ENCODE measurements at regions of chr9 and their contacts with region 1.

Region 1: DNA sequence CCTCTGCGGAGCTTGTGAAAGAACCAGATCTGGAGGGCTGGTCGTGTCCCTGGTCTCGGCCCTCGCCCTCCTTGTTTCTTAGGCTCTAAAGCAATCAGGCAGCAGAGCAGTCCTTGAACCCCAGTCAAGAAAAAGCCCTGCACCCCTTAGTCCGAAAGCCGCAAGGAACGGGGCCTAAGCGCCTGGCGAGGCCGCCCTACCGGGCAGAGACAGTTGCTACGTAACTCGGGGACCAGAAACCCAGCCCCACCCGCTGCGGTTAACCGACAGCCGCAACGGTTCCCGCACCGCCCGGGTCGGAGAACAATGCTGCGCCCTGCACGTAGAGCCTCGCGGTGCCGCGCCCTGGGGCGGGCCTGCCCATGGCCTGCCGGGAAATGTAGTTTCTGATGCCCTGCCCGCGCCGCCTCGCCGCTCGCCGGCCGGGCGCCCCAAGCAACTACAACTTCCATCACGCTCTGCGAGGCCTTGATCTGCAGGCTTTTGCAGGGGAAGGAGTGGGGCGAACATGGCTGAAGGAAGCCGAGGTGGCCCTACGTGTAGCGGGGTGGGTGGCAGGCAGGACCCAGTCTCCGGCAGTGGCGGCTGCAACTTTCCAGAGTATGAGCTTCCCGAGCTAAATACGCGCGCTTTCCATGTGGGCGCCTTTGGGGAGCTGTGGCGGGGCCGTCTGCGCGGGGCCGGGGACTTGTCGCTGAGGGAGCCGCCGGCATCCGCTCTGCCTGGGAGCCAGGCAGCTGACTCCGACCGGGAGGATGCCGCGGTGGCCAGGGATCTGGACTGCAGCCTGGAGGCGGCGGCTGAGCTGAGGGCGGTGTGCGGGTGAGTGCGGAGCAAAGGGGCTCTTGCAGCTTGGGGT is at the start of gene SNAPC3:
- DNase-seq: peak; percentile 90
- ATAC-seq: peak; percentile 95
- H3K4me3 Mint-ChIP-seq: peak within 1 kb of the TSS; percentile 91
- H3K27ac Mint-ChIP-seq: peak within 1 kb of the TSS; percentile 87
- H3K4me1 Mint-ChIP-seq: peaks cover 39% of the 10 kb centered on the region
- H3K27me3 Mint-ChIP-seq: no peaks in the 10 kb centered on the region
- CTCF ChIP-seq: no peak
- total RNA-seq, gene SNAPC3: 36.4 and 37.6 TPM in 2 replicates

Region 2: GRCh38 chr9:15104826-15105420 is 317.7 kb before region 1 on chr9:
- CTCF ChIA-PET with region 1: no interaction called
- POLR2A ChIA-PET with region 1: no interaction called
- intact Hi-C with region 1: loop called (anchors 10 kb)
- DNase-seq: no peak
- ATAC-seq: no peak
- H3K4me3 Mint-ChIP-seq: no peak overlapping the region
- H3K27ac Mint-ChIP-seq: no peak overlapping the region
- H3K4me1 Mint-ChIP-seq: no peaks in the 10 kb centered on the region
- H3K27me3 Mint-ChIP-seq: peaks cover 9% of the 10 kb centered on the region
- CTCF ChIP-seq: no peak

Region 3: GRCh38 chr9:15277400-15278090 is 145.1 kb before region 1 on chr9:
- CTCF ChIA-PET with region 1: interaction called, 4 read pairs
- POLR2A ChIA-PET with region 1: no interaction called
- intact Hi-C with region 1: loop called (anchors 1 kb)
- DNase-seq: no peak
- ATAC-seq: peak; percentile 60
- H3K4me3 Mint-ChIP-seq: no peak overlapping the region
- H3K27ac Mint-ChIP-seq: no peak overlapping the region
- H3K4me1 Mint-ChIP-seq: peaks cover 4% of the 10 kb centered on the region
- H3K27me3 Mint-ChIP-seq: no peaks in the 10 kb centered on the region
- CTCF ChIP-seq: no peak

Region 4: DNA sequence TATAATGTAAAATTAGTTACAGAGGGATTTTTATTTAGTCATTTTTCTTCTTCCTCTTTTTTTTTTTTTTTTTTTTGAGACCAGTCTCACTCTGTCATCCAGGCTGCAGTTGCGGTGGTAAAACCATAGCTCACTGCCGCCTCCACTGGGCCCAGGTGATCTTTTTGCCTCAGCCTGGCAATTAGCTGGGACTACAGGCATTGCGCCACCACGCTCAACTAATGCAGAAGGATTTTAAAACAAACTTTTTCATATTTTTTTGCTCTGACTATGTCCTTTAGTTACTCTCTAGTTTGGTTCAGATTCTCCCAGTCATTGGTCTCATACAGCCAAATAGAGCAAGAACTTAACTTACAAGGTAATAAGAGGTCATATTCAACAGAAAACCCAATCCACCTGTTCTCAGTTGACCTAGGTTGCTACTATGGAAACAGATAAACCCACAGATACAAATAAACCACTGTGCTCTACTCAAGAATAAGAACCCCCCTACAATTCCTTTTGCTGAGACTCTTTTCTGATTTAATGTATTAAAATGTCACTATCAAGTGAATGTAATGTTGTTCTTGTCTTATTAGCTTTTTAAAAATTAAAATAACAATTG is 65.4 kb before region 1 on chr9:
- CTCF ChIA-PET with region 1: no interaction called
- POLR2A ChIA-PET with region 1: no interaction called
- intact Hi-C with region 1: loop called (anchors 2 kb)
- DNase-seq: no peak
- ATAC-seq: peak; percentile 87
- H3K4me3 Mint-ChIP-seq: no peak overlapping the region
- H3K27ac Mint-ChIP-seq: no peak overlapping the region
- H3K4me1 Mint-ChIP-seq: peaks cover 6% of the 10 kb centered on the region
- H3K27me3 Mint-ChIP-seq: no peaks in the 10 kb centered on the region
- CTCF ChIP-seq: no peak

Region 5: GRCh38 chr9:15374336-15374735 is 48.3 kb before region 1 on chr9:
- CTCF ChIA-PET with region 1: no interaction called
- POLR2A ChIA-PET with region 1: no interaction called
- intact Hi-C with region 1: no loop called
- DNase-seq: no peak
- ATAC-seq: peak; percentile 40
- H3K4me3 Mint-ChIP-seq: no peak overlapping the region
- H3K27ac Mint-ChIP-seq: no peak overlapping the region
- H3K4me1 Mint-ChIP-seq: peaks cover 7% of the 10 kb centered on the region
- H3K27me3 Mint-ChIP-seq: peaks cover 10% of the 10 kb centered on the region
- CTCF ChIP-seq: no peak

Region 6: GRCh38 chr9:15469406-15469805 is 46.8 kb after region 1 on chr9:
- CTCF ChIA-PET with region 1: no interaction called
- POLR2A ChIA-PET with region 1: no interaction called
- intact Hi-C with region 1: loop called (anchors 5 kb)
- DNase-seq: no peak
- ATAC-seq: no peak
- H3K4me3 Mint-ChIP-seq: no peak overlapping the region
- H3K27ac Mint-ChIP-seq: no peak overlapping the region
- H3K4me1 Mint-ChIP-seq: peaks cover 2% of the 10 kb centered on the region
- H3K27me3 Mint-ChIP-seq: no peaks in the 10 kb centered on the region
- CTCF ChIP-seq: no peak

Region 7: GRCh38 chr9:15552636-15553527 is 130.3 kb after region 1 on chr9 and contains the start of gene CCDC171:
- CTCF ChIA-PET with region 1: no interaction called
- POLR2A ChIA-PET with region 1: interaction called, 4 read pairs
- intact Hi-C with region 1: loop called (anchors 1 kb)
- DNase-seq: peak; percentile 76
- ATAC-seq: peak; percentile 85
- H3K4me3 Mint-ChIP-seq: peak within 1 kb of the TSS; percentile 96
- H3K27ac Mint-ChIP-seq: peak within 1 kb of the TSS; percentile 82
- H3K4me1 Mint-ChIP-seq: peaks cover 19% of the 10 kb centered on the region
- H3K27me3 Mint-ChIP-seq: no peaks in the 10 kb centered on the region
- CTCF ChIP-seq: no peak
- total RNA-seq, gene CCDC171: 1.9 and 3.6 TPM in 2 replicates

Measured in activated B cell treated with CpG ODN at 0.5 μM for 24 hours (primary cell).